Right cardiac atrium (tissue), 5 donors: ENCODE measurements at regions of chr7 and their contacts with region 1.

Region 1: GRCh38 chr7:149742075-149742701 is 31.2 kb downstream of the ZNF467 start:
- DNase-seq: peak; percentile 59 to 84 (median 84)
- ATAC-seq: peak; percentile 77 to 81
- H3K4me3 ChIP-seq: peak overlapping the region; percentile 38
- H3K27ac ChIP-seq: no peak overlapping the region
- H3K4me1 ChIP-seq: no peaks in the 10 kb centered on the region
- H3K27me3 ChIP-seq: no peaks in the 10 kb centered on the region

Region 2: GRCh38 chr7:149662591-149663095 is 79.5 kb before region 1 on chr7:
- intact Hi-C with region 1: loop called in 1 of 4 experiments (anchors 5 kb)
- DNase-seq: peak; percentile 53 to 83 (median 82)
- ATAC-seq: peak; percentile 80 to 84
- H3K4me3 ChIP-seq: no peak overlapping the region
- H3K27ac ChIP-seq: no peak overlapping the region
- H3K4me1 ChIP-seq: no peaks in the 10 kb centered on the region
- H3K27me3 ChIP-seq: no peaks in the 10 kb centered on the region

Region 3: GRCh38 chr7:149670288-149670687 is 71.9 kb before region 1 on chr7:
- intact Hi-C with region 1: loop called in 3 of 4 experiments (anchors 2 to 10 kb)
- DNase-seq: peak; percentile 28 to 61 (median 55)
- ATAC-seq: peak; percentile 91 to 94
- H3K4me3 ChIP-seq: no peak overlapping the region
- H3K27ac ChIP-seq: no peak overlapping the region
- H3K4me1 ChIP-seq: no peaks in the 10 kb centered on the region
- H3K27me3 ChIP-seq: no peaks in the 10 kb centered on the region